ENCODE measurements at regions of chr12 and their contacts with region 1.

Region 1: DNA sequence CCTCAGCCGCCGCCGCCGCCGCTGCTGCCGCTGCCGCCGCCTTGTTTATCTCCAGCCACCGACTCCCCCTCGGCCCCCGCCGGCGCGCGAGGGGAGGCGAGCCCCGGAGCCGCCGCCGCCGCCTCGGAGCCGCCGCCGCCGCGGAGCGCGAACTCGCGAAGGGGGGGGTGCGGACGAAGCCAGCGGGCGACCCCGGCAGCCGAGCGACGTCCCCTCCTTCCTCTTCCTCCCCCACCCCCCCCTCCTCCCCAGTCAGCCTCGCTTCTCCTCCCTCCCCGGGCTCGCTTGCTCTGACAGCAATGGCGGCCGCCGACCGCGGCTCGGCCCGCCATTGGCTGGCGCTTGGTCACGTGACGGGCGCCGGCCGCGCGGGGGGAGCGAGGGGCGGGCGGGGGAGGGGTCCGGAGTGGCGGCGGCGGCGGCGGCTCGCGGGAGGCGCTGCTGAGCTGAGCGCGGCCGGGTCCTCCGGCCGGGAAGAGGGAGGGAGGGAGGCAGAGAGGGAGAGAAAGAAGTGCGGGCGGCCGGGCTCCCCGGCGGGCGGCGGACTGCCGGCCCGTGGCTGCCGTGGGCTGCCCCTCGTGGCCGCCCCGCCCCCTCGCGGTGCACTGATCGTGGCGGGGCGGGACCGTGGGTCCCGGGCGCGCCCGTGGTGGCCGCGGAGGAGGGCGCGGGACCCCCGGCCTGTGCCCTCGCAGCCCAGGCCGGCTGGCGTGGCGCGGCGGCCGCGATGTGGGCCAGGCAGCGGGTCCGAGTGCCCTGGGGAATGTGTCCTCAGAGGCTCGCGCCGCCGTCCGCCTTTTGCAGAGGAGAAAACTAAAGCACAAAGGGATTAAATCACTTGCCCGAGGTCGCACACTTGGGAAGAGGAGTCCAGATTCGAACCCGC is at the start of gene MED13L:
- DNase-seq: peak; percentile 94
- ATAC-seq: peak; percentile 77
- H3K4me3 ChIP-seq: peak within 1 kb of the TSS; percentile 95
- H3K27ac ChIP-seq: peak within 1 kb of the TSS; percentile 65
- H3K4me1 ChIP-seq: peaks cover 41% of the 10 kb centered on the region
- H3K27me3 ChIP-seq: no peaks in the 10 kb centered on the region
- CTCF ChIP-seq: 0 out of 2 replicates have a peak, but pooled peaks have one; percentile 13
- total RNA-seq, gene MED13L: 61.2 and 71.6 TPM in 2 replicates

Region 2: DNA sequence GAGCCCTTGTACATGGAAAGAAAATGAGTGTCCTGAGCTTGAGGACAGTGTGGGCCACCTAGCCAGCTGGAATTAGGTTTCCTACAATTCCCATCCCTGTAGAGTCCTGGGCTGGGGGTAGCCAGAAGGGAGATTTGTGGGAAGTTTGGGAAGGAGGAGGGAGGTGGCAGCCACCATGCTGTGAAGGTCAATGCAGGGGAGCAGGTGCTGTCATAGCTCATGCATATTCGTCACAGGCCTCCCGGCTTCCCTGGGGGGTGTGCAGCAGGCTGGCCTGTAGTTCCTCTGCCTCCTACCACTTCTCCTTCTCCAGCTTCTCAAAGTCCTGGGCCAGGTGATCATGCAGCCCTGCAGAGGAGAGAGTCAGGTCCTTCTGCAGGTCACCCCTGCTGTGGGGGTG is 1715.0 kb before region 1 on chr12:
- CTCF ChIA-PET with region 1: no interaction called
- POLR2A ChIA-PET with region 1: no interaction called
- intact Hi-C with region 1: no loop called
- DNase-seq: no peak
- ATAC-seq: no peak
- H3K4me3 ChIP-seq: no peak overlapping the region
- H3K27ac ChIP-seq: no peak overlapping the region
- H3K4me1 ChIP-seq: no peaks in the 10 kb centered on the region
- H3K27me3 ChIP-seq: peaks cover 64% of the 10 kb centered on the region
- CTCF ChIP-seq: no peak

Region 3: GRCh38 chr12:116015525-116015924 is 262.1 kb before region 1 on chr12:
- CTCF ChIA-PET with region 1: no interaction called
- POLR2A ChIA-PET with region 1: no interaction called
- intact Hi-C with region 1: loop called (anchors 5 kb)
- DNase-seq: peak; percentile 74
- ATAC-seq: peak; percentile 89
- H3K4me3 ChIP-seq: no peak overlapping the region
- H3K27ac ChIP-seq: no peak overlapping the region
- H3K4me1 ChIP-seq: peaks cover 8% of the 10 kb centered on the region
- H3K27me3 ChIP-seq: no peaks in the 10 kb centered on the region
- CTCF ChIP-seq: peak; percentile 87

Region 4: DNA sequence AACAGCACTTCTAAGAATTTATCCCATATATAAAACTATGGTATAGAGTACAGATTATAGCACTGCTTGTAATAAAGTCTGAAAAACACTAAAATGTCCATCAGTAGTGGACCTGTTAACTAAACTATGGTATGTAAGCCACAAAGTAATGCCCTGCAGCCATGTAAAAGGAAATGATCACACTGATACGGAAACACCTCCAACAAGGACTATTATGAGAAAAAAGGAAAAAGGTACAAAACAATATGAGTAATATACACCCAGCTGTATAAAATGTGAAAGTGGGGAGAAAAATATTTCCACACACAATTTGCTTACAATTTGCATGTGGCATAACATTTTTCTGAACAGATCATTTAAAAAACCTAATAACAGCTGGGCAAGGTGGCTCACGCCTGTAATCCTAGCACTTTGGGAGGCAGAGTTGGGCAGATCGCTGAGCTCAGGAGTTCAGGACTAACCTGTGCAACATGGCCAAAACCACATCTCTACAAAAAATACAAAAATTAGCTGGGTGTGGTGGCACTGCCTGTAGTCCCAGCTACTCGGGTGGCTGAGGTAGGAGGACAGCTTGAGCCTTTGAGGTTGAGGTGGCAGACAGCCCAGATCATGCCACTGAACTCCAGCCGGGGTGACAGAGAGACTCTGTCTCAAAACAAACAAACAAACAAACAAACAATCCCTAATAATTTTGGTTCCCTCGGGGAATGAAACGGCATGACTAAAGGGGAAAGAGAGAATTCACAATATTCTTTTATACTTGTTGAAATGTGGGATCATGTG is 250.7 kb before region 1 on chr12:
- CTCF ChIA-PET with region 1: no interaction called
- POLR2A ChIA-PET with region 1: no interaction called
- intact Hi-C with region 1: no loop called
- DNase-seq: peak; percentile 54
- ATAC-seq: peak; percentile 37
- H3K4me3 ChIP-seq: no peak overlapping the region
- H3K27ac ChIP-seq: peak overlapping the region; percentile 6
- H3K4me1 ChIP-seq: peaks cover 38% of the 10 kb centered on the region
- H3K27me3 ChIP-seq: no peaks in the 10 kb centered on the region
- CTCF ChIP-seq: no peak

Region 5: GRCh38 chr12:116210131-116210530 is 67.5 kb before region 1 on chr12:
- CTCF ChIA-PET with region 1: no interaction called
- POLR2A ChIA-PET with region 1: no interaction called
- intact Hi-C with region 1: no loop called
- DNase-seq: no peak
- ATAC-seq: no peak
- H3K4me3 ChIP-seq: no peak overlapping the region
- H3K27ac ChIP-seq: no peak overlapping the region
- H3K4me1 ChIP-seq: no peaks in the 10 kb centered on the region
- H3K27me3 ChIP-seq: no peaks in the 10 kb centered on the region
- CTCF ChIP-seq: no peak

Region 6: DNA sequence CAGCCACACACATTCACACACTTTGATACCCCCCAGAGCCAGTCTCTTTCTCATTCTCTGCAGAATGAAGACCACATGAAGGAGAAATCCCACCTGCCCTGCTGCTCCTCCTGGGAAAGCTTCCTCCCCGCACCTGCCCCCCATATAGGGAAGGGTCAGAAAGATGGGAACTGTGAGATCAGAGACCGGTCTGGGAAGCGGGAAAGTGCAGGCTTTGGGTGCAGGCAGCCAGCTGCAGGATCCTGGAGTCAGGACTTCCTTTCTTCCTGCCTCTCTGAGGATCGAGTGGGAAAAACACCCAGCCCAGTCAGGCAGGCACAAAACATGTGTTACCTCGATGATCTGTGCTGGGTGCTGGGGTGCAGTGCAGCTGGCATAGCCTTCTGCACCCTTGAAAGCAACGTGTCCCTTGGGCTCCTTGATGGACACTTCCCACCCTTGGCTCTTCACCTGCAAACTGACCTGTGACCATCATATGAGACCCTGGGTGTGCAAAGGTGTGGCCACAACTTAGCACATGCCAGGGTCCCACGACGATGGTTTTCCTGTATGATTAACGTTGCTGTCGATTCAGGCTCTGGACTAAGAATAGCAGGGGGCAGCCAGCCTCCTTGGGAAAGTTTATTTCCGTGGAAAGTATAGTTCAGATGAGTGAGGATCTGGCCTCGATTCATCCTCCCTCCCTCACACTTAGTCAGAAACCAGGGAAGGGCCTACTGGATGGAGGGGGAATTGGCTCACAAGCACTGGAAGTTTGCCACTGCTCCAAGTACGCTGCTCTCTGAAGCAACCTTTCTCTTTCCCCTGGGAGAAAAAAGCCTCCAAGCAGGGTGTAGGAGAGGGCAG is 105.3 kb after region 1 on chr12:
- CTCF ChIA-PET with region 1: no interaction called
- POLR2A ChIA-PET with region 1: interaction called, 7 read pairs
- intact Hi-C with region 1: loop called (anchors 5 kb)
- DNase-seq: peak; percentile 94
- ATAC-seq: peak; percentile 69
- H3K4me3 ChIP-seq: no peak overlapping the region; the same call in 1 of the 2 replicates
- H3K27ac ChIP-seq: peak overlapping the region; percentile 88
- H3K4me1 ChIP-seq: peaks cover 39% of the 10 kb centered on the region
- H3K27me3 ChIP-seq: no peaks in the 10 kb centered on the region
- CTCF ChIP-seq: no peak

Region 7: DNA sequence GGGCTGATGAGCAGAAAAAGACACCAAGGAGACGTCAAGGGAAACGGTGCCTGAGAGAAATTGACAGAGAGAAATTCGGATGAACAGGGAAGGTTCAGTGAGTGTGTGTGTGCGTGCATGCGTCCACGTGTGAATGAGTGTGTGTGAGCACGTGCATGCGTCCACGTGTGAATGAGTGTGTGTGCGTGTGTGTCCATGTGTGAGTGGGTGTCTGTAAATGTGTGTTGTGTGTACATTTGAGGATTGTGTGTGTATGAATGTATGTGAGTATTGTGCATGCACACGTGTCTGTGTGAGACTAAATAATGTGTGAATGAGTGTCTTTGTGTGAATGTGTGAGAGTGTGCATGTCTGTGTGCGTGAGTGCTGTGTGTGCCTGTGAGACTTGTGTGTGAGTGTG is 137.3 kb after region 1 on chr12:
- CTCF ChIA-PET with region 1: no interaction called
- POLR2A ChIA-PET with region 1: no interaction called
- intact Hi-C with region 1: no loop called
- DNase-seq: no peak
- ATAC-seq: no peak
- H3K4me3 ChIP-seq: no peak overlapping the region
- H3K27ac ChIP-seq: no peak overlapping the region
- H3K4me1 ChIP-seq: no peaks in the 10 kb centered on the region
- H3K27me3 ChIP-seq: no peaks in the 10 kb centered on the region
- CTCF ChIP-seq: no peak

Region 8: GRCh38 chr12:116455540-116456329 is 178.1 kb after region 1 on chr12:
- CTCF ChIA-PET with region 1: no interaction called
- POLR2A ChIA-PET with region 1: interaction called, 5 read pairs
- intact Hi-C with region 1: loop called (anchors 1 kb)
- DNase-seq: peak; percentile 83
- ATAC-seq: peak; percentile 17
- H3K4me3 ChIP-seq: peak overlapping the region; percentile 21; the same call in 1 of the 2 replicates
- H3K27ac ChIP-seq: peak overlapping the region; percentile 98
- H3K4me1 ChIP-seq: peaks cover 38% of the 10 kb centered on the region
- H3K27me3 ChIP-seq: no peaks in the 10 kb centered on the region
- CTCF ChIP-seq: no peak

Region 9: DNA sequence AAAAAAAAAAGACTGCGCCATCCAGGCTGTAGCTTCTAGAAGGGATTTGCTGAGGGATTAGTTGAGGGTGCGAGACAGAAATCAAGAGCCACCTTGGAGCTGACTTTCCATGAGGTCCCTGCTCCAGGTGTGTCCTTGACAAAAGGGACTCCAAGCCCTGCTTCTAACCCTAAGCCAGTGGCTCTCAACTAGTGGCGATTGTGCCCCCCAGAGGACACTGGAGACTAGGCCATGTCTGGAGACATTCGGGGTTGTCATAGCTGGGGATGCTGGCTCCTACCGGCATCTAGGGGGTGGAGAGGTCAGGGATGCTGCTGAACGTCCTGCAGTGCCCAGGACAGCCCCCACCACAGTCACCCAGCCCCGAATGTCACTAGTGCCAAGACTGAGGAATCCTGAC is 419.7 kb after region 1 on chr12:
- CTCF ChIA-PET with region 1: no interaction called
- POLR2A ChIA-PET with region 1: no interaction called
- intact Hi-C with region 1: loop called (anchors 5 kb)
- DNase-seq: peak; percentile 58
- ATAC-seq: peak; percentile 75
- H3K4me3 ChIP-seq: no peak overlapping the region
- H3K27ac ChIP-seq: peak overlapping the region; percentile 36
- H3K4me1 ChIP-seq: peaks cover 19% of the 10 kb centered on the region
- H3K27me3 ChIP-seq: no peaks in the 10 kb centered on the region
- CTCF ChIP-seq: peak; percentile 64